ENCODE measurements at regions of chr11 and their contacts with region 1.

Region 1: DNA sequence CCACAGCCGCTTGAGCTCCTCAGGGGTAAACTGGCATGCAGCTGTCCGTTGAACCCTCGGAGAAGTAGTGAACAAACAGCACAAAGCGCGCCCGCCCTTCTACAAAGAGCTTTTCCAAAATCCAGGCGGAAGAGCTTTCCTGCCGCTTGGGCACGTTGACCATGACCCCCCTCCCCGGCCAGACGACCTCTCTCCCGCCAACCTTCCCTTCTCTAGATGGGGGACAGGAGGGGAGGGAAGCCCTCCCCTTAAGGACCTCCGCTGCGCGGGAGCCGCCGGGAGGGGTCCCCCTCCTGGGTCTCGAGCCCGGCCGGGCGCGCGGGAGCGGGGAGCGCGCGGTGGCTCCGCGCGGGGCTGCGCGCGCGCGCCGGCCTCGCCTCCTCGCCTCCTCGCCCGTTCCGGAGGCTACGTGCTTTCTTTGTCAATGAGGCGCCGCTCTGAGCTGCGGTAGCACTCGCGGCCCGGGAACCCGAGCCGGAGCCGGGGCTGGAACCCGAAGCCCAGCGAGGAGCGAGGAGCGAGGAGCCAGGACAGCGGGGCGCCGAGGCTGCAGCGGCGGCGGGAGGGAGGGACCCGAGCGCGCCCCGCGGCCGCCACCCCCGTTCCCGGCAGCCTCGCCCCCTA is 118.6 kb downstream of the HIPK3 start:
- DNase-seq: no peak
- ATAC-seq: no peak
- H3K4me3 ChIP-seq: peak within 1 kb of the TSS; percentile 5 to 63 (median 51)
- H3K27ac ChIP-seq: no peak within 1 kb of the TSS
- H3K4me1 ChIP-seq: peaks cover 0 to 17% (median 4%) of the 10 kb centered on the region in 12 donors
- H3K27me3 ChIP-seq: peaks cover 0 to 43% (median 20%) of the 10 kb centered on the region in 9 donors
- CTCF ChIP-seq: no peak
- POLR2A ChIP-seq: no peak

Region 2: GRCh38 chr11:33266393-33267215 is 109.2 kb before region 1 on chr11:
- intact Hi-C with region 1: no loop called
- DNase-seq: peak in 2 of 5 donors; percentile 66 to 67
- ATAC-seq: peak; percentile 16 to 75 (median 62)
- H3K4me3 ChIP-seq: peak overlapping the region in 1 of 12 donors; percentile 17
- H3K27ac ChIP-seq: peak overlapping the region in 11 of 12 donors; percentile 1 to 60 (median 50)
- H3K4me1 ChIP-seq: peaks cover 23 to 97% (median 84%) of the 10 kb centered on the region in 12 donors
- H3K27me3 ChIP-seq: no peaks in the 10 kb centered on the region
- CTCF ChIP-seq: no peak
- POLR2A ChIP-seq: no peak

Region 3: GRCh38 chr11:33358150-33358831 is 17.5 kb before region 1 on chr11:
- intact Hi-C with region 1: no loop called
- DNase-seq: no peak
- ATAC-seq: peak; percentile 29 to 69 (median 64)
- H3K4me3 ChIP-seq: no peak overlapping the region
- H3K27ac ChIP-seq: no peak overlapping the region
- H3K4me1 ChIP-seq: peaks cover 0 to 15% (median 2%) of the 10 kb centered on the region in 12 donors
- H3K27me3 ChIP-seq: no peaks in the 10 kb centered on the region
- CTCF ChIP-seq: no peak
- POLR2A ChIP-seq: no peak

Region 4: GRCh38 chr11:33521384-33521783 is 145.6 kb after region 1 on chr11:
- intact Hi-C with region 1: no loop called
- DNase-seq: no peak
- ATAC-seq: no peak
- H3K4me3 ChIP-seq: no peak overlapping the region
- H3K27ac ChIP-seq: no peak overlapping the region
- H3K4me1 ChIP-seq: no peaks in the 10 kb centered on the region
- H3K27me3 ChIP-seq: peaks cover 0 to 4% (median 0%) of the 10 kb centered on the region in 9 donors
- CTCF ChIP-seq: no peak
- POLR2A ChIP-seq: no peak

Region 5: DNA sequence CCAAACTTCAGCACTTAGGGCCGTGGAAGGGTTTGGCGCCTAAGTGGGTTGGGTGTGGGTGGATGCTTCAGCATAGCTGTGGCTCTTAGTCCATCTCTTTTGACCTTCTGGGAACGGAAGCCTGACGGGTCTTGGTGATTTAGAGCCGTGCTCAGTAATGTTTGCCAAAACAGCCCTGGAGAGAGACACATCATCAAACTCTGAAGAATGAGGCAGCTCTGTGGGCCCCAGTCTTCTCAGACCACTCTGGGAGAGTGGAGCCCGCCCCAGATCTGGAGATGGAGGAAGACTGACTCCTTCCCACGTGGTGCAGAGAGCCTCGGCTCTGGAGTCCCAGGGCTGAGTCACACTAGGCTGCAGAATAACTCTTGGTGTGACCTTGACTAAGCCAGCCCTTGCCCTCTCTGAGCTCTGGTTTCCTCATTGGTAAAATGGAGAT is 156.0 kb after region 1 on chr11:
- intact Hi-C with region 1: loop called in 1 of 10 experiments (anchors 10 kb)
- DNase-seq: peak in 2 of 5 donors; percentile 19 to 45
- ATAC-seq: peak in 3 of 4 donors; percentile 32 to 80 (median 34)
- H3K4me3 ChIP-seq: no peak overlapping the region
- H3K27ac ChIP-seq: no peak overlapping the region
- H3K4me1 ChIP-seq: no peaks in the 10 kb centered on the region
- H3K27me3 ChIP-seq: peaks cover 0 to 3% (median 0%) of the 10 kb centered on the region in 9 donors
- CTCF ChIP-seq: no peak
- POLR2A ChIP-seq: no peak

Region 6: DNA sequence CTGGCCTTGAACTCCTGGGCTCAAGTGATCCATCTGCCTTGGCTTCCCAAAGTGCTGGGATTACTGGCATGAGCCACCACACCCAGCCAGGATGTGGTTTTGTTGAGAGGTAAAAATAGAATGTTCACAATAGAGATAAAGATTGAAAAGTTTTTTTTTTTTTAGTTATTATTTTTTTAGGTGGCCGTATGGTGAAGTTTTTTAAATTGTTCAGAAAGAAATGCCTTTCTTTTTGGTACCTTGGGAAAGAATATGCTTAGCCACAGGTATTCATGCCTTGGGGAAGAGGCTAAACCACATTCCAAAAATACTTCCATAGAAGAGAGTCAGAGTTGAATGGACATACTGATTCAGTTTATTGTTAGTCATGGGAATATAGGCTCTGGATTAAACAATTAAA is 181.4 kb after region 1 on chr11:
- intact Hi-C with region 1: loop called in 2 of 10 experiments (anchors 10 kb)
- DNase-seq: no peak
- ATAC-seq: no peak
- H3K4me3 ChIP-seq: no peak overlapping the region
- H3K27ac ChIP-seq: no peak overlapping the region
- H3K4me1 ChIP-seq: no peaks in the 10 kb centered on the region
- H3K27me3 ChIP-seq: no peaks in the 10 kb centered on the region
- CTCF ChIP-seq: no peak
- POLR2A ChIP-seq: no peak

Measured in heart left ventricle (tissue), 16 donors.